Activated CD4-positive, alpha-beta memory T cell treated with anti-CD3 and anti-CD28 coated beads for 36 hours (primary cell): ENCODE measurements at regions of chr1 and their contacts with region 1.

Region 1: GRCh38 chr1:87077959-87078639 is 163.7 kb downstream of the HS2ST1 start:
- DNase-seq: peak; percentile 12
- H3K4me3 Mint-ChIP-seq: no peak overlapping the region
- H3K27ac Mint-ChIP-seq: peak overlapping the region; percentile 47
- H3K4me1 Mint-ChIP-seq: peaks cover 18% of the 10 kb centered on the region
- H3K27me3 Mint-ChIP-seq: no peaks in the 10 kb centered on the region

Region 2: GRCh38 chr1:86774305-86775295 is 303.5 kb before region 1 on chr1:
- CTCF ChIA-PET with region 1: no interaction called
- POLR2A ChIA-PET with region 1: no interaction called
- intact Hi-C with region 1: loop called (anchors 1 kb)
- DNase-seq: peak; percentile 81
- H3K4me3 Mint-ChIP-seq: peak overlapping the region; percentile 14
- H3K27ac Mint-ChIP-seq: peak overlapping the region; percentile 18
- H3K4me1 Mint-ChIP-seq: peaks cover 15% of the 10 kb centered on the region
- H3K27me3 Mint-ChIP-seq: peaks cover 2% of the 10 kb centered on the region

Region 3: GRCh38 chr1:87014281-87014680 is 63.8 kb before region 1 on chr1:
- CTCF ChIA-PET with region 1: no interaction called
- POLR2A ChIA-PET with region 1: no interaction called
- intact Hi-C with region 1: no loop called
- DNase-seq: no peak
- H3K4me3 Mint-ChIP-seq: no peak overlapping the region
- H3K27ac Mint-ChIP-seq: no peak overlapping the region
- H3K4me1 Mint-ChIP-seq: no peaks in the 10 kb centered on the region
- H3K27me3 Mint-ChIP-seq: no peaks in the 10 kb centered on the region

Region 4: GRCh38 chr1:87024936-87025540 is 53.1 kb before region 1 on chr1:
- CTCF ChIA-PET with region 1: no interaction called
- POLR2A ChIA-PET with region 1: no interaction called
- intact Hi-C with region 1: loop called (anchors 5 kb)
- DNase-seq: no peak
- H3K4me3 Mint-ChIP-seq: no peak overlapping the region
- H3K27ac Mint-ChIP-seq: no peak overlapping the region
- H3K4me1 Mint-ChIP-seq: peaks cover 7% of the 10 kb centered on the region
- H3K27me3 Mint-ChIP-seq: no peaks in the 10 kb centered on the region

Region 5: DNA sequence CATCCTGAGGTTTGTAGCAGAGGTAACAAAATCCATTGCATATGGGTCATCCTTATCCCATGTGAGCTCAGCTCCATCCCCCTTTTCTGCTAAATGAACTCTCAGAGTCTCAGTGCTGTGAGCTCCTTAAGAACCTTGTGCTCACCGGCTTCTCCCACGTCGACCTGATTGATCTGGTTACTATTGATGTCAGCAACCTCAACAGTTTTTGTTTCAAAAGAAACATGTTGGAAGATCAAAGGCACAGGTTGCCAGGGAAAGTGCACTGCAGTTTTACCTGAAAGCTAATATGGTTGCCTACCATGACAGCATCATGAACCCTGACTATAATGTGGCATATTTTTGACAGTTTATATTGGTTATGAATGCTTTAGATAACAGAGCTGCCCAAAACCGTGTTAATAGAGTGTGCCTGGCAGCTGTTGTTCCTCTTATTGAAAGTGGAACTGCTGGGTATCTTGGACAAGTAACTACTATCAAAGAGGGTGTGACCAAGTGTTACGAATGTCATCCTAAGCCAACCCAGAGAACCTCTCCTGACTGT is 32.3 kb before region 1 on chr1:
- CTCF ChIA-PET with region 1: no interaction called
- POLR2A ChIA-PET with region 1: interaction called, 6 read pairs
- intact Hi-C with region 1: loop called (anchors 1 kb)
- DNase-seq: peak; percentile 75
- H3K4me3 Mint-ChIP-seq: peak overlapping the region; percentile 45
- H3K27ac Mint-ChIP-seq: peak overlapping the region; percentile 82
- H3K4me1 Mint-ChIP-seq: peaks cover 48% of the 10 kb centered on the region
- H3K27me3 Mint-ChIP-seq: no peaks in the 10 kb centered on the region

Region 6: DNA sequence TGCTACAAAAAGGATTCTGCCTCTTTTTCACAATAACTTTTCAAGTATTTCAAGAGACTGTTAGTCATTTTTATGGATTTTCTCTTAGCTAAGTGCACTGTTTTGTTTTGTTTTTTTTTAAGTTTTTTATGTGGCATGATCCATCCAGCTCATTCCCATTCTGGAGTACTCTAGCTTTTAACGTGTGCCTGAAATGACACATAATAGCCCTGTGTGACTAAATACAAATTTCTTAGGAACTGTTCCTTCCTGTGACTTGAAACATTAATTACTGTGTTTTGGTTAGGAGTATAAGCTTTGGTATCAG is 19.8 kb before region 1 on chr1:
- CTCF ChIA-PET with region 1: interaction called, 3 read pairs
- POLR2A ChIA-PET with region 1: no interaction called
- intact Hi-C with region 1: loop called (anchors 2 kb)
- DNase-seq: no peak
- H3K4me3 Mint-ChIP-seq: no peak overlapping the region
- H3K27ac Mint-ChIP-seq: no peak overlapping the region
- H3K4me1 Mint-ChIP-seq: peaks cover 28% of the 10 kb centered on the region
- H3K27me3 Mint-ChIP-seq: no peaks in the 10 kb centered on the region

Region 7: GRCh38 chr1:87140851-87141555 is 62.9 kb after region 1 on chr1:
- CTCF ChIA-PET with region 1: no interaction called
- POLR2A ChIA-PET with region 1: no interaction called
- intact Hi-C with region 1: no loop called
- DNase-seq: no peak
- H3K4me3 Mint-ChIP-seq: no peak overlapping the region
- H3K27ac Mint-ChIP-seq: no peak overlapping the region
- H3K4me1 Mint-ChIP-seq: no peaks in the 10 kb centered on the region
- H3K27me3 Mint-ChIP-seq: peaks cover 3% of the 10 kb centered on the region